Activated CD4-positive, alpha-beta T cell treated with anti-CD3 and anti-CD28 coated beads for 36 hours (primary cell): ENCODE measurements at regions of chr19 and their contacts with region 1.

Region 1: GRCh38 chr19:796692-797527 is at the start of gene PTBP1:
- DNase-seq: peak; percentile 100
- ATAC-seq: peak; percentile 86
- H3K4me3 Mint-ChIP-seq: peak within 1 kb of the TSS; percentile 93
- H3K27ac Mint-ChIP-seq: peak within 1 kb of the TSS; percentile 95
- H3K4me1 Mint-ChIP-seq: peaks cover 25% of the 10 kb centered on the region
- H3K27me3 Mint-ChIP-seq: no peaks in the 10 kb centered on the region
- total RNA-seq, gene PTBP1: 584 to 738 TPM

Region 2: GRCh38 chr19:488505-489417 is 308.1 kb before region 1 on chr19:
- CTCF ChIA-PET with region 1: no interaction called
- POLR2A ChIA-PET with region 1: no interaction called
- intact Hi-C with region 1: no loop called
- DNase-seq: peak; percentile 93
- ATAC-seq: peak; percentile 91
- H3K4me3 Mint-ChIP-seq: peak overlapping the region; percentile 71
- H3K27ac Mint-ChIP-seq: peak overlapping the region; percentile 75
- H3K4me1 Mint-ChIP-seq: peaks cover 2% of the 10 kb centered on the region
- H3K27me3 Mint-ChIP-seq: peaks cover 10% of the 10 kb centered on the region

Region 3: DNA sequence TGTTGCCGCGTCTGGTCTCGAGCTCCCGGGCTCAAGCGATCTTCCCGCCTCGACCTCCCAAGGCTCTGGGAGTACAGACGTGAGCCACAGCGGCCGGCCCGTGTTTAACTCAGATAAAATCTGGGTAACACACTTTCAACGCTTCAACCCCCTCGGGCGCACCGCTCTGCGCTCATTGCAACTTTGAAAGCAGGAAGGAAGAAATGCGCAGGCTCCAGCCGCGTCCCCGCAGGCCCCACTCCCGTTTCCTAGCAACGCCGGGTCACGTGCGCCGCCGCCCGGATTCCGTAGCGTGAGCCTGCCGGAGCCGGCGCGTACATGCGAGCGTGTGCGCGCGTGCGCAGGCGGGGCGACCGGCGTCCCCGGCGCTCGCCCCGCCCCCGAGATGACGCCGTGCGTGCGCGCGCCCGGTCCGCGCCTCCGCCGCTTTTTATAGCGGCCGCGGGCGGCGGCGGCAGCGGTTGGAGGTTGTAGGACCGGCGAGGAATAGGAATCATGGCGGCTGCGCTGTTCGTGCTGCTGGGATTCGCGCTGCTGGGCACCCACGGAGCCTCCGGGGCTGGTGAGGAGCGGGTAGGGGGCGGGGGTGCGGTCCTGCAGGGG is 224.7 kb before region 1 on chr19 and contains the start of gene BSG:
- CTCF ChIA-PET with region 1: no interaction called
- POLR2A ChIA-PET with region 1: no interaction called
- intact Hi-C with region 1: loop called in 1 of 2 experiments (anchors 1 kb)
- DNase-seq: peak; percentile 99
- ATAC-seq: peak; percentile 87
- H3K4me3 Mint-ChIP-seq: peak within 1 kb of the TSS; percentile 90
- H3K27ac Mint-ChIP-seq: peak within 1 kb of the TSS; percentile 95
- H3K4me1 Mint-ChIP-seq: peaks cover 36% of the 10 kb centered on the region
- H3K27me3 Mint-ChIP-seq: no peaks in the 10 kb centered on the region
- total RNA-seq, gene BSG: 165 to 175 TPM

Region 4: GRCh38 chr19:680287-681028 is 116.5 kb before region 1 on chr19:
- CTCF ChIA-PET with region 1: no interaction called
- POLR2A ChIA-PET with region 1: no interaction called
- intact Hi-C with region 1: loop called (anchors 1 kb)
- DNase-seq: peak; percentile 100
- ATAC-seq: peak; percentile 81
- H3K4me3 Mint-ChIP-seq: peak overlapping the region; percentile 70
- H3K27ac Mint-ChIP-seq: peak overlapping the region; percentile 94
- H3K4me1 Mint-ChIP-seq: peaks cover 3% of the 10 kb centered on the region
- H3K27me3 Mint-ChIP-seq: peaks cover 4% of the 10 kb centered on the region

Region 5: GRCh38 chr19:913080-913748 is 116.3 kb after region 1 on chr19 and contains the start of gene R3HDM4:
- CTCF ChIA-PET with region 1: no interaction called
- POLR2A ChIA-PET with region 1: no interaction called
- intact Hi-C with region 1: loop called in 1 of 2 experiments (anchors 1 kb)
- DNase-seq: peak; percentile 92
- ATAC-seq: peak; percentile 57
- H3K4me3 Mint-ChIP-seq: peak within 1 kb of the TSS; percentile 79
- H3K27ac Mint-ChIP-seq: peak within 1 kb of the TSS; percentile 90
- H3K4me1 Mint-ChIP-seq: peaks cover 32% of the 10 kb centered on the region
- H3K27me3 Mint-ChIP-seq: no peaks in the 10 kb centered on the region
- total RNA-seq, gene R3HDM4: 73.7 to 83.3 TPM

Region 6: GRCh38 chr19:1094975-1095701 is 298.2 kb after region 1 on chr19 and contains the start of gene POLR2E:
- CTCF ChIA-PET with region 1: no interaction called
- POLR2A ChIA-PET with region 1: no interaction called
- intact Hi-C with region 1: loop called in 1 of 2 experiments (anchors 1 kb)
- DNase-seq: peak; percentile 99
- ATAC-seq: peak; percentile 89
- H3K4me3 Mint-ChIP-seq: peak within 1 kb of the TSS; percentile 88
- H3K27ac Mint-ChIP-seq: peak within 1 kb of the TSS; percentile 93
- H3K4me1 Mint-ChIP-seq: peaks cover 49% of the 10 kb centered on the region
- H3K27me3 Mint-ChIP-seq: no peaks in the 10 kb centered on the region
- total RNA-seq, gene POLR2E: 171 to 229 TPM

Region 7: DNA sequence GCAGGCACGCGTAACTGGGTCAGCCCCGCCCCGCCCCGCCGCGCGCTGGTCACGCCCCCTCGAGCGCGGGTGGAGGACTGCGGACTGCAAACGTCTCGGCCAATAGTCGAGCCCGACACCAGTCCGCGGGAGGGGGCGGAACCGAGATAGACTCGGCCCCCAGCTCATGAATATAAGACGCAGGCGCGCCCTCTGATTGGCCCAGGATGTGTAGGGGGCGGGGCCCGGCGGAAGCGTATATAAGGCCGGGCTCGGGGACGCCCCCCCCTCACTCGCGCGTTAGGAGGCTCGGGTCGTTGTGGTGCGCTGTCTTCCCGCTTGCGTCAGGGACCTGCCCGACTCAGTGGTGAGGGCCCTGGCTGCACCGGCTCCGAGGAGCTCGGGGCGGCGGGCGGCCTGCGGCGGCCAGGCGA is 472.2 kb after region 1 on chr19 and contains the start of gene CIRBP:
- CTCF ChIA-PET with region 1: no interaction called
- POLR2A ChIA-PET with region 1: interaction called, 4 read pairs
- intact Hi-C with region 1: loop called in 1 of 2 experiments (anchors 1 kb)
- DNase-seq: peak; percentile 100
- ATAC-seq: peak; percentile 87
- H3K4me3 Mint-ChIP-seq: peak within 1 kb of the TSS; percentile 84
- H3K27ac Mint-ChIP-seq: peak within 1 kb of the TSS; percentile 87
- H3K4me1 Mint-ChIP-seq: peaks cover 66% of the 10 kb centered on the region
- H3K27me3 Mint-ChIP-seq: no peaks in the 10 kb centered on the region
- total RNA-seq, gene CIRBP: 123 to 188 TPM

Region 8: DNA sequence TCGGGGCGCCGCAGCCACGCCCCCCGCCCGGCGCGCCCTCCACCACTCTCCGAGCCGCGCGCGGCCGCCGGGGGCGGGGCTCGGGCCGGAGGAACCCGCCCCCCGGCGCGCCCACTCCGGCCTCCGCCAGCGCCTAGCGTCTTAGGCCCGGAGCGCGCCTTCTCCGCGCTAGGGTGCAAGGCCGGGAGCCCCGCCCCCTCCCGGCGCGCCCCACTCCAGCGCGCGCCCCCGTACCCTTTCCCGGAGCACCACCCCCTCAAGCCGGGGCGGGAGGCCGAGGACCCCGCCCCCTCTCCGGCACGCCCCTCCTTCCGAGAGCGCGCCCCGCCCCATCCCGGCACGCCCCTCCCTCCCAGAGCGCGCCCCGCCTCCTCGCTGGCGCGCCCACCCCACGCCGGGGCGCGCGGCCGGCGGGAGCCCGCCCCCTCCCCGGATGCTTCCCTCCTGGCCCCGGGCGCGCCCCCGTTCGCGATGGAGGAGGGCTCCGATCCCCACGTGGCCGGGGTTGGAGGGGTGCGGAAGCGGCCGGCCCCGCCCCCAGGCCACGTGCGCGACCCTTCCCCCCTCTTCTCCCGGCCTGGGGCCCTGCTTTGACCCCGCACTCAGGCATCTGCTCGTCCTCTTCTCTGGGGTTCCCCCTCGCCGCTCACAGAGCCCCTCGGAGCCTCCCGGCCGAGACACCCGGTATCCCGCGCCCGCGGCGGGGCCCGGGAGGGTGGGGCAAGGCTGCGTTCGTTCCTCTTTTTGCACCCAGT is 1067.0 kb after region 1 on chr19:
- CTCF ChIA-PET with region 1: no interaction called
- POLR2A ChIA-PET with region 1: no interaction called
- intact Hi-C with region 1: loop called in 1 of 2 experiments (anchors 5 kb)
- DNase-seq: peak; percentile 97
- ATAC-seq: peak; percentile 75
- H3K4me3 Mint-ChIP-seq: peak overlapping the region; percentile 68
- H3K27ac Mint-ChIP-seq: peak overlapping the region; percentile 72
- H3K4me1 Mint-ChIP-seq: peaks cover 37% of the 10 kb centered on the region
- H3K27me3 Mint-ChIP-seq: no peaks in the 10 kb centered on the region